ENCODE measurements at regions of chr2 and their contacts with region 1.

Region 1: DNA sequence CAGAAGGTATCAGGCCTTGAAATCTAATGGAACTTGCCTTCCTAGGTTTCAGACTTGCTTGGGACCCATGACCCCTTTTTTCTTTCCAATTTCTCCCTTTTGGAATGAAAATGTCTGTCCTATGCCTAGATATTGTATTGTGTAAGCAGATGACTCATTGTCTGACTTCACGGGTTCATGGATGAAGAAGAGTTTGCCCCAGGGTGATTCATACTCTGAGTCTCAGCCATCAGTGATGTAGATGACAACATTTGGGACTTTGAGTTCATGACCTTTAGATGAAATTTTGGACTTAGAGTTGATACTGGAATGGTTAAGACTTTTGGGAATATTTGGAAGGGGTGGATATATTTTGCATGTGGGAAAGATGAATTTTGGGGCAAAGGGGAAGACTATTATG is 11.2 kb upstream of the SCYGR5 start:
- DNase-seq: peak; percentile 95
- H3K4me3 Mint-ChIP-seq: no peak overlapping the region
- H3K27ac Mint-ChIP-seq: no peak overlapping the region
- H3K4me1 Mint-ChIP-seq: peaks cover 14% of the 10 kb centered on the region
- H3K27me3 Mint-ChIP-seq: no peaks in the 10 kb centered on the region
- CTCF ChIP-seq: no peak

Region 2: GRCh38 chr2:227406177-227407031 is 249.1 kb before region 1 on chr2:
- CTCF ChIA-PET with region 1: interaction called, 16 read pairs
- POLR2A ChIA-PET with region 1: no interaction called
- intact Hi-C with region 1: loop called (anchors 1 kb)
- DNase-seq: peak; percentile 98
- H3K4me3 Mint-ChIP-seq: peak overlapping the region; percentile 21
- H3K27ac Mint-ChIP-seq: peak overlapping the region; percentile 38
- H3K4me1 Mint-ChIP-seq: peaks cover 41% of the 10 kb centered on the region
- H3K27me3 Mint-ChIP-seq: no peaks in the 10 kb centered on the region
- CTCF ChIP-seq: peak; percentile 67

Region 3: GRCh38 chr2:227545990-227546389 is 109.5 kb before region 1 on chr2:
- CTCF ChIA-PET with region 1: no interaction called
- POLR2A ChIA-PET with region 1: no interaction called
- intact Hi-C with region 1: no loop called
- DNase-seq: peak; percentile 16
- H3K4me3 Mint-ChIP-seq: no peak overlapping the region
- H3K27ac Mint-ChIP-seq: no peak overlapping the region
- H3K4me1 Mint-ChIP-seq: no peaks in the 10 kb centered on the region
- H3K27me3 Mint-ChIP-seq: no peaks in the 10 kb centered on the region
- CTCF ChIP-seq: no peak

Region 4: DNA sequence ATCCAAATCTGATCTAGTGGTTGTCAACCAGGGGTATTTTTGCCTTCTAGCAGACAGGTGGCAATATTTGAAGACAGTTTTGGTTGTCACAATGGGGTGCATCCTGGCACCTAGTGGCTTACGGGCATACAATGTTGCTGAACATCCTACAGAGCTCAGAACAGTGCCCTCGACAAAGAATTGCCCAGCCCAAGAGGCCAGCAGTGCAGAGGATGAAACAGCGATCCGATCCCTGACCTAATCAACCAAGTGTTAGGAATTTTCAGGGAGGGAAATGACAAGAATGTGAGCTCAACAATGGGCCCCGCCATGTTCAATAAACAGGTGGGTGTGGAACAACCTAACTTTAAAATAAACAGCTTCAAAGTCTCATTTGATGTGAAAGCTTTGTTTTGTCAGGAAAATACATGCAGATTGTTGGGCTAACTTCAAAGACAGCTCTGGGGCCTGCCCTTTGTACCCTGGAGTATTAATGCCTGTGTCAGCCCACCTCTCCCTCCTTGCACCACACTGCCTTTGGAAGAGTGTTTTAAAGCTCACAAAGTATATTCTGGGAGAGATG is 11.4 kb before region 1 on chr2:
- CTCF ChIA-PET with region 1: interaction called, 12 read pairs
- POLR2A ChIA-PET with region 1: interaction called, 3 read pairs
- intact Hi-C with region 1: no loop called
- DNase-seq: no peak
- H3K4me3 Mint-ChIP-seq: no peak overlapping the region
- H3K27ac Mint-ChIP-seq: no peak overlapping the region
- H3K4me1 Mint-ChIP-seq: no peaks in the 10 kb centered on the region
- H3K27me3 Mint-ChIP-seq: no peaks in the 10 kb centered on the region
- CTCF ChIP-seq: no peak

Region 5: GRCh38 chr2:227766373-227766883 is 111.0 kb after region 1 on chr2:
- CTCF ChIA-PET with region 1: interaction called, 143 read pairs
- POLR2A ChIA-PET with region 1: interaction called, 18 read pairs
- intact Hi-C with region 1: loop called (anchors 1 kb)
- DNase-seq: peak; percentile 86
- H3K4me3 Mint-ChIP-seq: no peak overlapping the region
- H3K27ac Mint-ChIP-seq: no peak overlapping the region
- H3K4me1 Mint-ChIP-seq: peaks cover 5% of the 10 kb centered on the region
- H3K27me3 Mint-ChIP-seq: no peaks in the 10 kb centered on the region
- CTCF ChIP-seq: peak; percentile 80

Region 6: GRCh38 chr2:227817850-227818674 is 162.6 kb after region 1 on chr2:
- CTCF ChIA-PET with region 1: interaction called, 4 read pairs
- POLR2A ChIA-PET with region 1: no interaction called
- intact Hi-C with region 1: loop called (anchors 2 kb)
- DNase-seq: peak; percentile 100
- H3K4me3 Mint-ChIP-seq: peak overlapping the region; percentile 80
- H3K27ac Mint-ChIP-seq: peak overlapping the region; percentile 92
- H3K4me1 Mint-ChIP-seq: peaks cover 46% of the 10 kb centered on the region
- H3K27me3 Mint-ChIP-seq: no peaks in the 10 kb centered on the region
- CTCF ChIP-seq: no peak

Region 7: GRCh38 chr2:227884511-227884947 is 229.1 kb after region 1 on chr2:
- CTCF ChIA-PET with region 1: interaction called, 10 read pairs
- POLR2A ChIA-PET with region 1: no interaction called
- intact Hi-C with region 1: loop called (anchors 1 kb)
- DNase-seq: peak; percentile 76
- H3K4me3 Mint-ChIP-seq: no peak overlapping the region
- H3K27ac Mint-ChIP-seq: peak overlapping the region; percentile 46
- H3K4me1 Mint-ChIP-seq: peaks cover 22% of the 10 kb centered on the region
- H3K27me3 Mint-ChIP-seq: no peaks in the 10 kb centered on the region
- CTCF ChIP-seq: peak; percentile 74

Measured in MCF 10A (cell line).